ENCODE measurements at regions of chrX and their contacts with region 1.

Region 1: GRCh38 chrX:64093761-64094160 is 111.7 kb downstream of the AMER1 start:
- DNase-seq: peak; percentile 2
- H3K4me3 ChIP-seq: no peak overlapping the region
- H3K27ac ChIP-seq: no peak overlapping the region
- H3K4me1 ChIP-seq: no peaks in the 10 kb centered on the region
- H3K27me3 ChIP-seq: no peaks in the 10 kb centered on the region
- CTCF ChIP-seq: peak; percentile 35; the same call in 1 of the 2 replicates

Region 2: DNA sequence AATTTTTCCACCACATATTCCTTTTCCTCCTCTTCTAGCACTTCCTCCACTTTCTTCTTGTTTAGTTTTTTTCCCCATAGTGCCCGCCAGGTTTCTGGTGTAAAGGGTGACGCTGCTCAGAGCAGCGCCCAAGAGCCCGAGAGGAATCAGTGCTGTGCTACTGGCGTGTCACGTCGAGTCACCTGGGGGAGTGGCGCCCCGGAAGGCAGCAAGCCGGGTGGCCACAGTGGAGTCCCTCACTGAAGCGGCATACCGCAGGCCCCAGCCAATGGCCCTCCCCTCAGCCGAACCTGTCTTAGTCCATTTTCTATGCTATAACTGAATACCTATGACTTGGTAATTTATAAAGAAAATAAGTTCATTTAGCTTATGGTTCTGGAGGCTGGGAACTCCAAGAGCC is 794.2 kb before region 1 on chrX:
- CTCF ChIA-PET with region 1: no interaction called
- POLR2A ChIA-PET with region 1: no interaction called
- intact Hi-C with region 1: no loop called
- DNase-seq: no peak
- H3K4me3 ChIP-seq: no peak overlapping the region
- H3K27ac ChIP-seq: no peak overlapping the region
- H3K4me1 ChIP-seq: no peaks in the 10 kb centered on the region
- H3K27me3 ChIP-seq: no peaks in the 10 kb centered on the region
- CTCF ChIP-seq: no peak

Region 3: DNA sequence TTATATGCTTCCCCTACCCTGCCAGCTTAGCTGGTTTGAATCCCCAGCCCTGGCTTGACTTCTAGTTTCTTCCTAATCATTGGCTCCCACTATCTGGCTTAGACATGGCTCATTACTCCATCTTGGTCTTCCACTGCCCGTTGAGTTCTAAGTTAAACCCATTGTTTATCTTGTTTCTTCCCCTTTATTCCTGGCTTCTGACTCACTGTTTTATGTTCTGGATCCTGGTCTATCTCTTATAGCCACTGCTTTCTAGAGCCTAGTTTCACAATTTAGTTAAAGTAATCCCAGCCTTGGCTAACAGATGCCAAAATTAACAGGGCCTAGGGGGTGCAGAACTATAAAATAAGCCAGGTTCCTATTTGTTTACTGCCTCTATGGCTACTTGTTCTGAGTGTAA is 429.7 kb before region 1 on chrX:
- CTCF ChIA-PET with region 1: no interaction called
- POLR2A ChIA-PET with region 1: no interaction called
- intact Hi-C with region 1: no loop called
- DNase-seq: no peak
- H3K4me3 ChIP-seq: no peak overlapping the region
- H3K27ac ChIP-seq: no peak overlapping the region
- H3K4me1 ChIP-seq: no peaks in the 10 kb centered on the region
- H3K27me3 ChIP-seq: no peaks in the 10 kb centered on the region
- CTCF ChIP-seq: no peak

Region 4: DNA sequence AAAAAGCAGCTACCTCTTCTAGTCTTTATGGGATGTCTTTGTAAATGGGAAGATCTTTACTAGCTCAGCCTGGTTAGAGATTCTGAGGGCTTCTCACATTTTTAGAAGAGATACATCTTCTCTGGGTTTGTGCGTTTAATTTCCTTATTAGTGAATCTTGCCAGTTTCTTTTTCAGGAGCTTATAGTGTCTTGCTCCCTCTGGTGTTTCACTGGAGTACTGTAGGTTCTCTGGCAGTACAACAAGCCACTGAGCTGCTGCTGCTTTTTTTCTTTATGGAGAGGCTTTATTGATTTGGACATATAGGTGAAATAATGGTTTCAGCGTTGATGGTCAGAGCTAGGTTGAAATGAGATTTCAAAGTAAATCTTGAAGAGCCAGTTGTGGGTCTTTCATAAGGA is 1357.9 kb after region 1 on chrX:
- CTCF ChIA-PET with region 1: no interaction called
- POLR2A ChIA-PET with region 1: no interaction called
- intact Hi-C with region 1: loop called (anchors 10 kb)
- DNase-seq: peak; percentile 13
- H3K4me3 ChIP-seq: no peak overlapping the region
- H3K27ac ChIP-seq: no peak overlapping the region
- H3K4me1 ChIP-seq: no peaks in the 10 kb centered on the region
- H3K27me3 ChIP-seq: no peaks in the 10 kb centered on the region
- CTCF ChIP-seq: peak; percentile 49